GM12878 (cell line): ENCODE measurements at regions of chr6 and their contacts with region 1.

Region 1: GRCh38 chr6:15254070-15254841 is 8.4 kb downstream of the JARID2 start:
- DNase-seq: peak; percentile 82
- ATAC-seq: peak; percentile 50
- H3K4me3 ChIP-seq: peak overlapping the region; percentile 42; the same call in 1 of the 2 replicates
- H3K27ac ChIP-seq: peak overlapping the region; percentile 92
- H3K4me1 ChIP-seq: peaks cover 78% of the 10 kb centered on the region
- H3K27me3 ChIP-seq: no peaks in the 10 kb centered on the region
- CTCF ChIP-seq: peak; percentile 40 to 65 (median 50); a peak in 5 of 6 replicates
- EP300 ChIP-seq: peak in 1 of 2 experiments; percentile 27; a peak in 1 of 4 replicates
- POLR2A ChIP-seq: no peak
- RAD21 ChIP-seq: peak; percentile 71

Region 2: DNA sequence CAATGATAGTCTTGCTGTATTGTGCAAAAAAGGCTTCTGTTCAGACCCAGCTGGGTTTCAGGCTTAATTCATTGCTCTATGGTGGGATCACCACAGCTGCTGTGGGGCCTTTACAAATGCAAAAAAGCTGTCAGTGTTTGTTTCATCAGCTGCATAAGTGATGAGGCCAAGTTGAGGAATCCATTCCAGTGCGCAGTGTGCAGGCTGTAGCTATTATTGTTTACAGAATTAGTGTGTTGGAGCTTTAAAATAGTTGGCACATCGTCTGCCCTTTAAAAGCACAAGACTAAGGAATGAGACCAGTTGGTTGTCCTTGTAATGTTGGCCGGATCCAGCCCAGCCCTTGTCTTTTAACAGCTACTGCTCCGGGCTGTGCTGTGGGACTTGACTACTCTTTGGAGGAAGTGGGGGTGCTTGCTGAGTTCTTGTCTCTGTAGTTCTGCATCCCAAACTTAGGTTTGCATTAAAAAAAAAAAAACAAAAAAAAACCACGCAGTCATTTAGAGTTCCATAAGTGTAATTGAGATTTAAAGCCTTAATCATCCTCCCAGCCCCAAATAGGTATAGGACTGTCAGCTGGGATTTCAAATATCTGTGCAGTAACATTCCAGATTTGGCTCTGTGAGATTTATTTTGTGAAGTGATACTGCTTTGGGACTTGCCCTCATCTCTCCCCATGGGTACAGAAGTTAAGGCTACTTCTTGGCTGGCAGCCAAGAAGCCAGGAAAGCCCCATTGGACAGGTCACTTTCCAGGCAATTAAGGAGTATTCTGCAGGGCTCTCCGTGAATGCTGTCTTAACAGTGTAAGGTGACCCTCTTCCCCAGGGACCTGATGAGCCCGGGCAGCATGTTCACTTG is 10.9 kb after region 1 on chr6:
- CTCF ChIA-PET with region 1: interaction called, 21 read pairs
- POLR2A ChIA-PET with region 1: interaction called, 6 read pairs
- RAD21 ChIA-PET with region 1: interaction called, 64 read pairs
- SMC1A ChIA-PET with region 1: interaction called, 88 read pairs
- in situ Hi-C with region 1: no loop called
- intact Hi-C with region 1: no loop called
- DNase-seq: no peak
- ATAC-seq: peak; percentile 45
- H3K4me3 ChIP-seq: peak overlapping the region; percentile 26; the same call in 1 of the 2 replicates
- H3K27ac ChIP-seq: peak overlapping the region; percentile 62
- H3K4me1 ChIP-seq: peaks cover 61% of the 10 kb centered on the region
- H3K27me3 ChIP-seq: no peaks in the 10 kb centered on the region
- CTCF ChIP-seq: no peak
- EP300 ChIP-seq: no peak
- POLR2A ChIP-seq: no peak
- RAD21 ChIP-seq: no peak

Region 3: GRCh38 chr6:15299430-15300131 is 45.3 kb after region 1 on chr6:
- CTCF ChIA-PET with region 1: interaction called, 10 read pairs
- POLR2A ChIA-PET with region 1: interaction called, 8 read pairs
- RAD21 ChIA-PET with region 1: interaction called, 29 read pairs
- SMC1A ChIA-PET with region 1: interaction called, 32 read pairs
- in situ Hi-C with region 1: no loop called
- intact Hi-C with region 1: loop called (anchors 2 kb)
- DNase-seq: peak; percentile 90
- ATAC-seq: peak; percentile 88
- H3K4me3 ChIP-seq: peak overlapping the region; percentile 50; the same call in 1 of the 2 replicates
- H3K27ac ChIP-seq: peak overlapping the region; percentile 80
- H3K4me1 ChIP-seq: peaks cover 79% of the 10 kb centered on the region
- H3K27me3 ChIP-seq: no peaks in the 10 kb centered on the region
- CTCF ChIP-seq: no peak
- EP300 ChIP-seq: peak; percentile 59 to 84; a peak in 3 of 4 replicates
- POLR2A ChIP-seq: peak; percentile 47; the same call in 1 of the 2 replicates
- RAD21 ChIP-seq: no peak

Region 4: GRCh38 chr6:15358579-15359327 is 104.5 kb after region 1 on chr6:
- CTCF ChIA-PET with region 1: interaction called, 3 read pairs
- POLR2A ChIA-PET with region 1: interaction called, 4 read pairs
- RAD21 ChIA-PET with region 1: interaction called, 19 read pairs
- SMC1A ChIA-PET with region 1: interaction called, 34 read pairs
- in situ Hi-C with region 1: no loop called
- intact Hi-C with region 1: no loop called
- DNase-seq: peak; percentile 75
- ATAC-seq: peak; percentile 80
- H3K4me3 ChIP-seq: peak overlapping the region; percentile 27
- H3K27ac ChIP-seq: peak overlapping the region; percentile 81
- H3K4me1 ChIP-seq: peaks cover 75% of the 10 kb centered on the region
- H3K27me3 ChIP-seq: no peaks in the 10 kb centered on the region
- CTCF ChIP-seq: no peak
- EP300 ChIP-seq: no peak; a peak in 1 of 4 replicates
- POLR2A ChIP-seq: no peak
- RAD21 ChIP-seq: no peak

Region 5: GRCh38 chr6:15441215-15441868 is 187.1 kb after region 1 on chr6:
- CTCF ChIA-PET with region 1: interaction called, 24 read pairs
- POLR2A ChIA-PET with region 1: no interaction called
- RAD21 ChIA-PET with region 1: interaction called, 18 read pairs
- SMC1A ChIA-PET with region 1: interaction called, 39 read pairs
- in situ Hi-C with region 1: no loop called
- intact Hi-C with region 1: loop called (anchors 5 kb)
- DNase-seq: no peak
- ATAC-seq: peak; percentile 74
- H3K4me3 ChIP-seq: no peak overlapping the region
- H3K27ac ChIP-seq: no peak overlapping the region
- H3K4me1 ChIP-seq: peaks cover 29% of the 10 kb centered on the region
- H3K27me3 ChIP-seq: no peaks in the 10 kb centered on the region
- CTCF ChIP-seq: peak; percentile 79 to 83 (median 79)
- EP300 ChIP-seq: no peak
- POLR2A ChIP-seq: no peak
- RAD21 ChIP-seq: peak; percentile 87

Region 6: GRCh38 chr6:15479761-15480160 is 225.5 kb after region 1 on chr6:
- CTCF ChIA-PET with region 1: no interaction called
- POLR2A ChIA-PET with region 1: no interaction called
- RAD21 ChIA-PET with region 1: no interaction called
- SMC1A ChIA-PET with region 1: no interaction called
- in situ Hi-C with region 1: no loop called
- intact Hi-C with region 1: no loop called
- DNase-seq: no peak
- ATAC-seq: no peak
- H3K4me3 ChIP-seq: no peak overlapping the region
- H3K27ac ChIP-seq: no peak overlapping the region
- H3K4me1 ChIP-seq: no peaks in the 10 kb centered on the region
- H3K27me3 ChIP-seq: no peaks in the 10 kb centered on the region
- CTCF ChIP-seq: no peak
- EP300 ChIP-seq: no peak
- POLR2A ChIP-seq: no peak
- RAD21 ChIP-seq: no peak